ENCODE measurements at regions of chr1 and their contacts with region 1.

Region 1: GRCh38 chr1:25771246-25772114 is 28.5 kb upstream of the SELENON start:
- DNase-seq: peak; percentile 15 to 78 (median 58)
- ATAC-seq: peak; percentile 17
- H3K4me3 ChIP-seq: no peak overlapping the region
- H3K4me3 Mint-ChIP-seq: peak overlapping the region; percentile 77
- H3K27ac ChIP-seq: peak overlapping the region; percentile 12 to 72
- H3K27ac Mint-ChIP-seq: peak overlapping the region; percentile 98
- H3K4me1 ChIP-seq: peaks cover 82% of the 10 kb centered on the region
- H3K4me1 Mint-ChIP-seq: peaks cover 85% of the 10 kb centered on the region
- H3K27me3 ChIP-seq: no peaks in the 10 kb centered on the region
- H3K27me3 Mint-ChIP-seq: no peaks in the 10 kb centered on the region
- CTCF ChIP-seq: no peak

Region 2: DNA sequence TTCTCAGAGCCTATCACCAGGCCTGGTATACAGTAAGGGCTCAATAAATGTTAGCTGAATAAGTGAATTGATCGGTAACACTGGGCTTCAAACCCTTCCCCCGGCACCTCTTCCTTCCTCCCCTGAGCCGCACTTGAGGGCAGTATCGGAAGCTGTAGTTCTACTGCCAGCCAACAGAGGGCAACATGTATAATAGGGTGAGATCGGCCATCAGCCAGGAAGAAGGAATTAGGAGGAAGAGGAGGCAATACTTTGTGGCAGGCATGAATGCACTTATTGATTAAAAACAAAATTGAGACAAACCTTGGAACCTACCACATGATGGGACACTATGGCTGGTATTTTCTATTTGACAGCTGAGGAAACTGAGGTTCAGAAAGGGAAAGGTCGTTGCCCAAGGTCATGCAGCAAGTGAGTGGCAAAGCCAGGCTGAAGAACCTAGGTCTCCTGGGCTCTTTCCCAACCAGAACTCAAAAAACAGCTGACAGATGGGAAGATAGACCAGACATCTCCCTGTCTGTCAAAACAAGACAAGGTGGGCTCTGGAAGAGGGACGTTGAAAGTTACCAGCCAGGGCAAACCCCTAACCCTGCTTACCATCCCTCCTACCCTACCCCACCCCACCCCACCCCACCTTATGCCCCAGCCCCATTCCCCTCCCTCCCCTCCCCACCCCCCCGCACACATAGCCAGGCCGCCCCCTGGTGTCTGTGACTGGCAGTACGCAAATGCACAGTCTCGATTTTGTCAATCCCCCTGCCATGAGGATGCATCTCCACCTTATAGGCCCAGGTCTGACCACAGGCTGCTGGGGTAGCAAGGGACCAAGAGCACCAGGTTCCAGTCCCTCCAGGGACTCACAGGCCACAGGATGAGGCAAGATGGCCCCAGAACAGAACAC is 734.1 kb before region 1 on chr1:
- CTCF ChIA-PET with region 1: no interaction called
- POLR2A ChIA-PET with region 1: no interaction called
- intact Hi-C with region 1: no loop called
- DNase-seq: peak; percentile 52 to 84 (median 63)
- ATAC-seq: peak; percentile 77
- H3K4me3 ChIP-seq: no peak overlapping the region
- H3K4me3 Mint-ChIP-seq: peak overlapping the region; percentile 4
- H3K27ac ChIP-seq: no peak overlapping the region
- H3K27ac Mint-ChIP-seq: peak overlapping the region; percentile 28
- H3K4me1 ChIP-seq: peaks cover 56% of the 10 kb centered on the region
- H3K4me1 Mint-ChIP-seq: peaks cover 30% of the 10 kb centered on the region
- H3K27me3 ChIP-seq: no peaks in the 10 kb centered on the region
- H3K27me3 Mint-ChIP-seq: no peaks in the 10 kb centered on the region
- CTCF ChIP-seq: peak; percentile 72

Region 3: DNA sequence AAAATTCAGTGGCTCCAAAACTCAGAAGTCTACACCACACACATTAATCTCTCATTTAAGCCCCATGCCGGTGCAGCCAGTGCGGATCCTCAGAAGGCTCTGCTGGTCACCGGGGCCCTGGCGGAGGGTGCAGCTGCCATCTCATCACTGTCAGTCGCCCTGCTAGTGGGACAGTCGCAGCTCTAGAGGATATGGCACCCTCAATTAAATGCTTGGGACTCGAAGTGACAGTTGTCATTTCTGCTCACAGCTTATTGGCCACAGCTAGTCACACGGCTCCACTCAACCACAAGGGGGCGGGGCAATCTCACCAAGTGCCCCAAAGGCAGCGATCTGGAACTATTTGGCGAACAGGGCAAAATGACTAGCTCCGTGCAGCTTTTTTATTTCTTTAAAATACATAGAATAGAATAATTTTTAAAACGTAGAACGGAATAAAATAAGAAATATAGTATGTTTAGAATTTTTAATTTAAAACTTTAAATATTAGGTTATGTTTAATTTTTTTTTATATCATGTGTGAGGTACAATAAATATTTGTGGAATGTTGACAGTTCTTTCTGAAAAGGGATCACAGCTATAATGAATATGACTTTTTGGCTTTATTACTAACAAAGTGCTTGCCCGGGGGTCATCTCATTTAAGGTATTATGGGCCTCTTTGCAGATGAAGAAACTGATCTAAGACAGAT is 162.8 kb before region 1 on chr1:
- CTCF ChIA-PET with region 1: no interaction called
- POLR2A ChIA-PET with region 1: interaction called, 13 read pairs
- intact Hi-C with region 1: no loop called
- DNase-seq: peak; percentile 78 to 95 (median 86)
- ATAC-seq: peak; percentile 99
- H3K4me3 ChIP-seq: peak overlapping the region; percentile 6
- H3K4me3 Mint-ChIP-seq: peak overlapping the region; percentile 45
- H3K27ac ChIP-seq: no peak overlapping the region
- H3K27ac Mint-ChIP-seq: no peak overlapping the region
- H3K4me1 ChIP-seq: peaks cover 17% of the 10 kb centered on the region
- H3K4me1 Mint-ChIP-seq: peaks cover 25% of the 10 kb centered on the region
- H3K27me3 ChIP-seq: no peaks in the 10 kb centered on the region
- H3K27me3 Mint-ChIP-seq: no peaks in the 10 kb centered on the region
- CTCF ChIP-seq: peak; percentile 71

Region 4: DNA sequence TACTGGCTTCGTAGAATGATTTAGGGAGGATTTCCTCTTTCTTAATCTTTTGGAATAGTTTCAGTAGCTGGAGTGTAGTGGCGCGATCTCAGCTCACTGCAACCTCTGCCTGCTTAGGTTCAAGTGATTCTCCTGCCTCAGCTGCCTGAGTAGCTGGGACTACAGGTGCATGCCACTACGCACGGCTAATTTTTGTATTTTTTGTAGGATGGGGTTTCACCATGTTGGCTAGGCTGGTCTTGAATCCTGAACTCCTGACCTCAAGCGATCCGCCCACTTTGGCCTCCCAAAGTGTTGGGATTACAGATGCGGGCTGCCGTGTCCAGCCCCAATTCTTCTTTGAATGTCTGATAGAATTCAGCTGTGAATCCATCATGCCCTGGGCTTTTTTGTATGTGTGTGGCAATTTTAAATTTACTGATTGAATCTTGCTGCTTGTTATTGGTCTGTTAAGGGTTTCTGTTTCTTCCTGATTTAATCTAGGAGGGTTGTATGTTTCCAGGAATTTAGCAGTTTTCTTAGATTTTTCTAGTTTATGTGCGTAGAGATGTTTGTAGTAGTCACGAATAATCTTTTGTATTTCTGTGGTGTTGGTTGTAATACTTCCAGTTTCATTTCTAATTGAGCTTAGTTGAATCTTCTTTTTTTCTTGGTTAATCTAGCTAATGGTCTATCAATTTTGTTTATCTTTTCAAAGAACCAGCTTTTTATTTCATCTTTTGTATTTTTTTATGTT is 139.6 kb before region 1 on chr1:
- CTCF ChIA-PET with region 1: no interaction called
- POLR2A ChIA-PET with region 1: interaction called, 15 read pairs
- intact Hi-C with region 1: no loop called
- DNase-seq: peak in 1 of 14 experiments; percentile 38
- ATAC-seq: peak; percentile 16
- H3K4me3 ChIP-seq: peak overlapping the region; percentile 46
- H3K4me3 Mint-ChIP-seq: peak overlapping the region; percentile 87
- H3K27ac ChIP-seq: peak overlapping the region; percentile 57 to 63
- H3K27ac Mint-ChIP-seq: peak overlapping the region; percentile 88
- H3K4me1 ChIP-seq: peaks cover 26% of the 10 kb centered on the region
- H3K4me1 Mint-ChIP-seq: peaks cover 86% of the 10 kb centered on the region
- H3K27me3 ChIP-seq: no peaks in the 10 kb centered on the region
- H3K27me3 Mint-ChIP-seq: no peaks in the 10 kb centered on the region
- CTCF ChIP-seq: no peak

Region 5: DNA sequence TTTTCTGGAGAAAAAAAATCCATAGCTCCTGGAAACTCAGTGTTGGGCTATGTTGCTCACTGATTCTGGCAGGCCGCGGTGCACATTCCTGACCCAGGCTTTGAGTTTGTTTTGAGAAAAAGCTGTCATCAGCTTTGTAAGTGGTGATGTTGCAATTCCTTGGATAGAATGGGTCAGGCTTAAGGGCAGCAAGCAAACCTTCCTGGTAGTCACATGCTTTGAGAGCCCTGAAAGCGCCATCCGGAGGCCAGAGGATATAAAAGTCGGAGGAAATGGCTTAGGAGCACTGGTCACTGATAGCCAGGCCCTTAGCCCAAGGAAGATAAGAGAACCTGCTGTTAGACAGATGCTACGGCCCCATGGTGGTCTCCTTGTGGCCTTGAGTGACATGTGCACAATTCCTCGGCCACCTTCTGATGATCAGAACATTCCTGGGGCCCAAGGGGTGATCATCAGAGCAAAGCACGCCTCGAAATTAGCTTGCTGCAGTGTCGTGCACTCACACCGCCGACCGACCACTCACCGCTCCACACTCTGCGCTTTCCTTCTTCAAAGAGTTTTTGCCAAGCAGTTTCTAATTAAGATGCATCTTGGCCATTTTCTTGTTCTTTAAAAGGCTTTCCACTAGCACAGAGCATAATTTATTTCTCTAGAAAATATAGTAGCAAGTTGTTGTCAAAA is 76.2 kb before region 1 on chr1:
- CTCF ChIA-PET with region 1: interaction called, 4 read pairs
- POLR2A ChIA-PET with region 1: interaction called, 18 read pairs
- intact Hi-C with region 1: loop called in 1 of 2 experiments (anchors 5 kb)
- DNase-seq: no peak
- ATAC-seq: no peak
- H3K4me3 ChIP-seq: no peak overlapping the region
- H3K4me3 Mint-ChIP-seq: no peak overlapping the region
- H3K27ac ChIP-seq: peak overlapping the region in 1 of 2 donors; percentile 39
- H3K27ac Mint-ChIP-seq: peak overlapping the region; percentile 74
- H3K4me1 ChIP-seq: peaks cover 48% of the 10 kb centered on the region
- H3K4me1 Mint-ChIP-seq: peaks cover 73% of the 10 kb centered on the region
- H3K27me3 ChIP-seq: no peaks in the 10 kb centered on the region
- H3K27me3 Mint-ChIP-seq: no peaks in the 10 kb centered on the region
- CTCF ChIP-seq: no peak

Region 6: GRCh38 chr1:25786887-25787759 is 15.6 kb after region 1 on chr1:
- CTCF ChIA-PET with region 1: no interaction called
- POLR2A ChIA-PET with region 1: interaction called, 12 read pairs
- intact Hi-C with region 1: no loop called
- DNase-seq: no peak
- ATAC-seq: no peak
- H3K4me3 ChIP-seq: no peak overlapping the region
- H3K4me3 Mint-ChIP-seq: no peak overlapping the region
- H3K27ac ChIP-seq: peak overlapping the region in 1 of 2 donors; percentile 22
- H3K27ac Mint-ChIP-seq: peak overlapping the region; percentile 30
- H3K4me1 ChIP-seq: no peaks in the 10 kb centered on the region
- H3K4me1 Mint-ChIP-seq: peaks cover 5% of the 10 kb centered on the region
- H3K27me3 ChIP-seq: no peaks in the 10 kb centered on the region
- H3K27me3 Mint-ChIP-seq: no peaks in the 10 kb centered on the region
- CTCF ChIP-seq: no peak

Region 7: DNA sequence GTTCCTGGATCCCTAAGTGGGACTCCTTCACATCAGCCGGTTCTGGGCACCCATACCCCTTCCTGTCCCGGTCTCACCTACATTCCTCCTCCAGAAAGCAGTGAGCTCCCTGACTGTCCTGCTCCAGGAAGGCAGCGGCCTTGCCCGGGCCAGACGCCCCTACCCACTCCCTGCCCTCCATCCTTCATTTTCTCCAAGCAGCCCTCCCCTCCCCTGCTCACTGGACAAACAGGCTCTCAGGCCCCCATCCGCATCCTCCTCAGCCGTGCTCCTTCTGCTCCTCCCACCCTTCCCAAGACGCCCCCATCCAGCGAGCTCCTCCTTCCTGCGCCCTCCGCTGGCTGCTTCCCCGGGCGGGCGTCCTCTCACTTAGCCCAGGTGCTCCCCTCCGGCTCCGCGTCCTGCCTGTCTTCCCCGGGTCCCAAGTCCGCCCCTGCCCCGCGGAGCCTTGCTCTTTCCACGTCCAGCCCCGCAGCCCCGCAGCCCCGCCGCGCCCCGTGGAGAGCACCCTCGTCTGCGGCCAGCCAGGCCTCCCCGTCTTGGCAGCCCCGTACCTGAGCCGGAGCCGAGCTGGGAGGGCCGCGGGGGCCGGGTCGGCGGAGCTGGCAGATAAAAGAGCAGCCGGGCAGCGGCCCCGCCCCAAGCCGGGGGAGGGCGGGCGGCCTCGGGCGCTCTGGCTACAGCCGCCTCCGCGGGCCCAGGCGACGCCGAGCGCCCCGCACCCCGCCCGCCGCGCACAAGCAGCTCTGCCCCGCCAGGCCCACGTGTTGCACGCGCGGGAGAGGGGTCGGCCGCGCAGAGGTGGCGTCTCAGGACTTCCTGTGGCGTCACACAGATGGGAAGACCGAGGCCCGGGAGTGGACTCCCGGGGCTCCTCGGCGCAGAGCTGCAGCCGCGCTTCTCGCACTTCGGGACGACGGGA is 103.7 kb after region 1 on chr1 and contains the start of gene PAQR7:
- CTCF ChIA-PET with region 1: no interaction called
- POLR2A ChIA-PET with region 1: no interaction called
- intact Hi-C with region 1: loop called in 1 of 2 experiments (anchors 1 kb)
- DNase-seq: peak in 13 of 14 experiments; percentile 19 to 81 (median 50)
- ATAC-seq: peak; percentile 84
- H3K4me3 ChIP-seq: peak within 1 kb of the TSS; percentile 66
- H3K4me3 Mint-ChIP-seq: peak within 1 kb of the TSS; percentile 88
- H3K27ac ChIP-seq: no peak within 1 kb of the TSS
- H3K27ac Mint-ChIP-seq: peak within 1 kb of the TSS; percentile 67
- H3K4me1 ChIP-seq: peaks cover 17% of the 10 kb centered on the region
- H3K4me1 Mint-ChIP-seq: peaks cover 10% of the 10 kb centered on the region
- H3K27me3 ChIP-seq: no peaks in the 10 kb centered on the region
- H3K27me3 Mint-ChIP-seq: no peaks in the 10 kb centered on the region
- CTCF ChIP-seq: no peak
- total RNA-seq, gene PAQR7: 1.1 to 1.5 TPM